T-cell (primary cell): ENCODE measurements at regions of chr18 and their contacts with region 1.

Region 1: DNA sequence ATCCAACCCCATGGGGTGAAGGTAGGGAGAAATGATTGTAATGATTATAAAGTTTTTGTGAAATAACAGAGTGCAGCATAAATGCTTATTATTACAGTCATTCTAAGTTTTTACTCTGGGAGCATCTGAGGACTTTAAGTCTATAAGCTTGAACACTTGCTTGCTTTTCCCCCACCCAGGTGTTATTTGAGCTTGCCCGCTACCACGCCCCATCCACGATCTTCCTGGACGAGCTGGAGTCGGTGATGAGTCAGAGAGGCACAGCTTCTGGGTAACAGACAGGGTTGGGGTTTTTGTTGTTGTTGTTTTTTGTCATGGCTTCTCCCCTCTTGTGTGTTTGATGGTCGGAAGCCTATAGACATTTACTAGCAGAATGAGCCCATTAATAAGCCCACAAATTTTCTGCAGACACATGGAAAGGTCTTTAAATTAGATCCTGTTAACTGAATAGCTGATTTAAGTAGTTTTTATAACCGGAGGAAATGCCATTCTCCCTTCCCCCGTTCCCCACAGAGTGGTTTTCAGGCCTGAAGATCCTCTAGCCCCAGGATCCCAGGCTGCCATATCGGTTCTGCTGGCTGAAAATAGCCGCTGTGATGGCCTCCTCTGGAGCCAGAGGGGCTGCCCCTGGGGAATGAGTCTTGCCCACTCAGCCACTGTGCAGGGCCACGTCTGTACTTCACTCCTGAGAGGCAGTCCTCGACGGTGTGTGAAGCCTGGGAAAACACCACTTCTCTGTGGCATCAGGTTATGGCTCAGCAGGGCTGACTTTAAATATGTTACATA is 39.9 kb upstream of the ELOA2 start:
- DNase-seq: no peak
- ATAC-seq: no peak
- H3K4me3 ChIP-seq: no peak overlapping the region
- H3K4me3 Mint-ChIP-seq: no peak overlapping the region
- H3K27ac ChIP-seq: no peak overlapping the region
- H3K27ac Mint-ChIP-seq: no peak overlapping the region
- H3K4me1 ChIP-seq: no peaks in the 10 kb centered on the region
- H3K4me1 Mint-ChIP-seq: no peaks in the 10 kb centered on the region
- H3K27me3 ChIP-seq: peaks cover 0 to 7% of the 10 kb centered on the region in 2 experiments
- H3K27me3 Mint-ChIP-seq: peaks cover 4 to 5% of the 10 kb centered on the region in 2 donors

Region 2: DNA sequence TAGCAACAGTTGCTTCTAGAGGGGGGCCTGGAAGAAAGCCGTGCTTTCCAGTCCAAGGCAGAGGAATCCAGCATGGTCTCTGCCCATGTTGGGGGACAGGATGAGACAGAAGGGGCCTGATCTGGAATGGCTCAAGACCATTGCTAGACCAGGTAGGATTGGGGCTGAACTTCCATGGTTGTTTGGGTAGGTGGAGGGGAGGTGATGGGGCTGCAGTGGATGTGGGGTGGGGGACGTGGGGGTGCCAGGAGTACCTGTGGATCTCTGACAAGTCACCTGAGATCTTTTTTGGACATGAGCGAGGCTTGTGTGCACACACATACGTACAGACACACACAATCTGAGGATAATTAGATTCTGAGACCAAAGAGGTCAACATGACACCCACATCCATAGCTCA is 404.9 kb after region 1 on chr18:
- CTCF ChIA-PET with region 1: no interaction called
- POLR2A ChIA-PET with region 1: interaction called in 1 of 2 experiments, 10 read pairs
- DNase-seq: no peak
- ATAC-seq: no peak
- H3K4me3 ChIP-seq: no peak overlapping the region
- H3K4me3 Mint-ChIP-seq: no peak overlapping the region
- H3K27ac ChIP-seq: no peak overlapping the region
- H3K27ac Mint-ChIP-seq: no peak overlapping the region
- H3K4me1 ChIP-seq: no peaks in the 10 kb centered on the region
- H3K4me1 Mint-ChIP-seq: no peaks in the 10 kb centered on the region
- H3K27me3 ChIP-seq: peaks cover 0 to 10% of the 10 kb centered on the region in 2 experiments
- H3K27me3 Mint-ChIP-seq: peaks cover 12 to 15% of the 10 kb centered on the region in 2 donors